Mucosa of descending colon (tissue), 3 donors: ENCODE measurements at regions of chr5 and their contacts with region 1.

Region 1: GRCh38 chr5:1641560-1642166 is 117.9 kb upstream of the LPCAT1 start:
- DNase-seq: peak; percentile 75 to 90 (median 83)
- ATAC-seq: peak; percentile 89
- H3K4me3 ChIP-seq: no peak overlapping the region
- H3K4me1 ChIP-seq: peaks cover 4% of the 10 kb centered on the region
- CTCF ChIP-seq: peak; percentile 79

Region 2: GRCh38 chr5:1167728-1168709 is 473.6 kb before region 1 on chr5:
- intact Hi-C with region 1: loop called in 1 of 2 experiments (anchors 10 kb)
- DNase-seq: peak; percentile 60 to 78 (median 70)
- ATAC-seq: peak; percentile 87
- H3K4me3 ChIP-seq: no peak overlapping the region
- H3K4me1 ChIP-seq: peaks cover 7% of the 10 kb centered on the region
- CTCF ChIP-seq: peak; percentile 65

Region 3: DNA sequence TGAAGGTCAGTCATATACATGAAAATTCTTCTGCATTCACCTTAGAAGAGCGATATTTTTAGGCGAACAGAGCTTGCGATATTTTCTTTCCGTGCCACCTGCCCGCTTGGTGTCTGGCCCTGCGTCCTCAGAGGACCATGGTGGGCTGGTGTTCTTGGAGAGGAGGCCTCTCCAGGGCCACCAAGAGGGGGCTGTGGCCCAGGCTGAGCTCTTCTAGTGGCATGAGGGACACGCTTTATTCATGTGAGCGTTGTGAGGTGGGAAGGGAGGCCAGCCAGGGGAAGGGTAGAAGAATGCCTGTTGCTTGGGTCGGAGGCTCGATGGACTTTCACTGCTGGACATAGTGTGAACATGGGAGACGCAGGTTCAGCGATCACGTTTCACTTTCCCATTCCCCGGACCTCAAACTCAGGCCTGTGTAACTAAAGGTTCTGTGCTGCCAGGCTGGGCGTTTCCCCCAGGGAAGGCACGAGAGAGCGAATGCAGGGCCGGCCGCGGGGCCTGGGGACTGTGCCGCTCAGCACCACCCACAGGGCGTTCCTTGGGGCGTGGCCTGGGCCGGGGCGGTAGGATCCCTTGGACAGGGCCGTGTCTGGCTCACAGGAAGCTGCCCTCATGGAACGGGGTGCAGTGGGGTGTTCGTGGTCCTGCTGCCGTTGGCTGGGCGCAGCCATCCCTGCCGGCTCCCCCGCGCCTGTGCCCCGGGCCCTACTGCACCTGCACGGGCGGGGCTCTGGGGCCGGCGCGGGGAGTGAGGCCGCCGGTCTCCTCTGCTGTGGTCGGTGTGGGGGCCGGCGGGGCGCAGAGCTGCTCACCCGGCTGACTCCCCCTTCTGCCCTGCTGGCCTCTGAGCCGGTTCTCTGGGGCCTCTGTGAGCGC is 256.0 kb before region 1 on chr5:
- intact Hi-C with region 1: loop called in 1 of 2 experiments (anchors 10 kb)
- DNase-seq: peak; percentile 95 to 96 (median 96)
- ATAC-seq: peak; percentile 97
- H3K4me3 ChIP-seq: peak overlapping the region; percentile 26
- H3K4me1 ChIP-seq: peaks cover 10% of the 10 kb centered on the region
- CTCF ChIP-seq: no peak